ENCODE measurements at regions of chr5 and their contacts with region 1.

Region 1: GRCh38 chr5:148740966-148741742 is 85.3 kb upstream of the ADRB2 start:
- DNase-seq: peak; percentile 82
- H3K4me3 ChIP-seq: no peak overlapping the region
- H3K27ac ChIP-seq: no peak overlapping the region
- H3K4me1 ChIP-seq: no peaks in the 10 kb centered on the region
- H3K27me3 ChIP-seq: no peaks in the 10 kb centered on the region
- CTCF ChIP-seq: peak; percentile 49
- POLR2A ChIP-seq: no peak

Region 2: GRCh38 chr5:148653836-148654781 is 87.0 kb before region 1 on chr5 and contains the start of gene HTR4:
- CTCF ChIA-PET with region 1: no interaction called
- POLR2A ChIA-PET with region 1: no interaction called
- dilution Hi-C with region 1: no loop called
- intact Hi-C with region 1: no loop called
- DNase-seq: no peak
- H3K4me3 ChIP-seq: no peak within 1 kb of the TSS
- H3K27ac ChIP-seq: no peak within 1 kb of the TSS
- H3K4me1 ChIP-seq: no peaks in the 10 kb centered on the region
- H3K27me3 ChIP-seq: peaks cover 42 to 50% of the 10 kb centered on the region in 2 experiments
- CTCF ChIP-seq: no peak
- POLR2A ChIP-seq: no peak
- total RNA-seq, gene HTR4: not detected in 2 replicates

Region 3: GRCh38 chr5:148805326-148806290 is 64.5 kb after region 1 on chr5:
- CTCF ChIA-PET with region 1: interaction called, 18 read pairs
- POLR2A ChIA-PET with region 1: no interaction called
- dilution Hi-C with region 1: no loop called
- intact Hi-C with region 1: loop called (anchors 5 kb)
- DNase-seq: peak; percentile 77
- H3K4me3 ChIP-seq: no peak overlapping the region
- H3K27ac ChIP-seq: peak overlapping the region; percentile 10
- H3K4me1 ChIP-seq: peaks cover 35% of the 10 kb centered on the region
- H3K27me3 ChIP-seq: no peaks in the 10 kb centered on the region
- CTCF ChIP-seq: no peak
- POLR2A ChIP-seq: no peak

Region 4: GRCh38 chr5:148826053-148826738 is 85.0 kb after region 1 on chr5 and contains the start of gene ADRB2:
- CTCF ChIA-PET with region 1: interaction called, 60 read pairs
- POLR2A ChIA-PET with region 1: interaction called, 4 read pairs
- dilution Hi-C with region 1: no loop called
- intact Hi-C with region 1: loop called (anchors 2 kb)
- DNase-seq: peak; percentile 94
- H3K4me3 ChIP-seq: peak within 1 kb of the TSS; percentile 15 to 62 (median 49)
- H3K27ac ChIP-seq: peak within 1 kb of the TSS; percentile 42
- H3K4me1 ChIP-seq: peaks cover 34% of the 10 kb centered on the region
- H3K27me3 ChIP-seq: no peaks in the 10 kb centered on the region
- CTCF ChIP-seq: no peak
- POLR2A ChIP-seq: peak; percentile 94
- total RNA-seq, gene ADRB2: 0.60 and 0.86 TPM in 2 replicates

Region 5: DNA sequence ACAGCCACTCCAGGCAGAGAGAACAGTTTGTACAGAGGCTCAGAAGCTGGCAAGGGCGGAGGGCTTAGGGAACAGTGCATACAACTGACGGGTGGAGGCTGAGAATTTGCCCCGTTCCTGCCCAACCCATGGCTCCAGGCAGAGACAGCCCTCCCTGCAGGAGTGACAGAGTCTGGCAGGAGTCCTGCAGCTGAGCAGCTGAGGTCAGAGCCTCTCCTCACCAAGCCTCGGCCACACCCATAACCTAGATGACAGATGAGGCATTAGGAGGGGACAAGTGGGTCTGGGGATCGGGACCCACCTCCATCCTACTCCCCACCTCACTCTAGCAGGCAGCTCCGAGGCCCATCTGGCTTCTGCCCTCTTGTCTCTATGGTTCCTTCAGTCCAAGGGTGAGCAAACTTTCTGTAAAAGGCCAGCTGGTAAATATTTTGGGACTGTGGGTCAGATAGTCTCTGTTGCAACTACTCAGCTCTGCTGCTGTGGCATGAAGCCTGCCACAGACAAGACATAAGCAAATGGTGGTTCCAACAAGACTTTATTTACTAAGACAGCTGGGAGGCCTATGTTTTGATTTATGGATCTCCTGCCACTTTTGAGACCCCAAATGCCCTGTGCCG is 238.1 kb after region 1 on chr5:
- CTCF ChIA-PET with region 1: interaction called, 11 read pairs
- POLR2A ChIA-PET with region 1: no interaction called
- dilution Hi-C with region 1: no loop called
- intact Hi-C with region 1: no loop called
- DNase-seq: no peak
- H3K4me3 ChIP-seq: no peak overlapping the region
- H3K27ac ChIP-seq: no peak overlapping the region
- H3K4me1 ChIP-seq: peaks cover 28% of the 10 kb centered on the region
- H3K27me3 ChIP-seq: no peaks in the 10 kb centered on the region
- CTCF ChIP-seq: no peak
- POLR2A ChIP-seq: no peak

Region 6: GRCh38 chr5:148991606-148992005 is 250.5 kb after region 1 on chr5:
- CTCF ChIA-PET with region 1: interaction called, 53 read pairs
- POLR2A ChIA-PET with region 1: no interaction called
- dilution Hi-C with region 1: no loop called
- intact Hi-C with region 1: no loop called
- DNase-seq: no peak
- H3K4me3 ChIP-seq: no peak overlapping the region
- H3K27ac ChIP-seq: no peak overlapping the region
- H3K4me1 ChIP-seq: no peaks in the 10 kb centered on the region
- H3K27me3 ChIP-seq: no peaks in the 10 kb centered on the region
- CTCF ChIP-seq: no peak
- POLR2A ChIP-seq: no peak

Region 7: GRCh38 chr5:149005077-149005892 is 264.1 kb after region 1 on chr5:
- CTCF ChIA-PET with region 1: interaction called, 167 read pairs
- POLR2A ChIA-PET with region 1: no interaction called
- dilution Hi-C with region 1: no loop called
- intact Hi-C with region 1: no loop called
- DNase-seq: no peak
- H3K4me3 ChIP-seq: no peak overlapping the region
- H3K27ac ChIP-seq: no peak overlapping the region
- H3K4me1 ChIP-seq: peaks cover 7% of the 10 kb centered on the region
- H3K27me3 ChIP-seq: no peaks in the 10 kb centered on the region
- CTCF ChIP-seq: no peak
- POLR2A ChIP-seq: no peak